AG04449 (cell line): ENCODE measurements at regions of chr1 and their contacts with region 1.

Region 1: GRCh38 chr1:8409106-8409505 is 91.2 kb downstream of the SLC45A1 start:
- DNase-seq: no peak
- H3K4me3 ChIP-seq: no peak overlapping the region; the same call in 1 of the 2 replicates
- CTCF ChIP-seq: peak; percentile 35

Region 2: DNA sequence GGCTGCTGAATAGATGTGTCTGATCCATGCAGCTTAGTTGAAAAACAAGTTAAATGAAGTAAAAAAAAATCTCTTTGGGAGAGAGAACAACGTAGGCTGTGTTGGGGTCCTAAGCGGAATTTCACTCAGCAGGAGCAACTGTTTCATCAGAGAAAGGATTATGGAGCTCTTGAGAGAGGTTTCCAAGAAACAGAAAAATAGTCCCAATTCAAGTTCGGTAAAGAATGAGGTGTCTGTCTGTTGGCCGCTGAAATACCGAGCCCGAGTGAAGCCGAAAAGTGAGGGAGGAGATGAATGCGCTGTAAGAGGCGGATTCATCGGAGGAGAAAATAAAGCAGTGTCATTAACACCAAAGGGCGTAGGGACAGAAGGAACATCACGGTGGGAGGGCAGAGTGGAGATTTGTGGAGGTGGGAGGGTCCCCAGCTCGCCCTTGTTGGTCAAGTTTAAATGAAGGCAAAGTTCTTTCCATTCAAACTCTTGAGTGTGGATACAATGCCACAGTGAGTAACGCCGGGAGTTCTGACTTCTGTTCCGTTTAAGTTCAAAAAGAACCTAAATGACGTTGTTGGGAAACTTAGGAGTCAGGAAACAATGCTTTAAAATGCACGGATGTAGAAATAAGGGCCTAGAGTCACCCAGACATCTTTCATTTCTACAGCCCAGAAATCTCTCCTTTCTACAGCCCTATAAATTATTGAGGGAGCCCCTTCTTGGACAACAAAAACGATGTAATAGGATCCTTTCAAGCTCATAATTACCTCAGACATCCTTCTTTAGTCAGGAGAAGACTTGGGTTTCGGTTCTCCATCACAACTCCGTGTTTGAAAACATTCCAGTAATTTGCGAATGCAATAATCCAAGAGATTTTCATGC is 106.8 kb before region 1 on chr1:
- CTCF ChIA-PET with region 1: no interaction called
- POLR2A ChIA-PET with region 1: no interaction called
- DNase-seq: no peak
- H3K4me3 ChIP-seq: no peak overlapping the region
- CTCF ChIP-seq: no peak

Region 3: GRCh38 chr1:8343464-8344001 is 65.6 kb before region 1 on chr1:
- CTCF ChIA-PET with region 1: no interaction called
- POLR2A ChIA-PET with region 1: no interaction called
- DNase-seq: peak; percentile 82
- H3K4me3 ChIP-seq: peak overlapping the region; percentile 3; the same call in 1 of the 2 replicates
- CTCF ChIP-seq: no peak

Region 4: GRCh38 chr1:8373581-8374241 is 35.4 kb before region 1 on chr1:
- CTCF ChIA-PET with region 1: interaction called, 10 read pairs
- POLR2A ChIA-PET with region 1: no interaction called
- DNase-seq: peak; percentile 49
- H3K4me3 ChIP-seq: peak overlapping the region; percentile 20; the same call in 1 of the 2 replicates
- CTCF ChIP-seq: no peak

Region 5: GRCh38 chr1:8396786-8397406 is 12.2 kb before region 1 on chr1:
- CTCF ChIA-PET with region 1: interaction called, 28 read pairs
- POLR2A ChIA-PET with region 1: interaction called, 6 read pairs
- DNase-seq: peak; percentile 99
- H3K4me3 ChIP-seq: no peak overlapping the region
- CTCF ChIP-seq: no peak

Region 6: DNA sequence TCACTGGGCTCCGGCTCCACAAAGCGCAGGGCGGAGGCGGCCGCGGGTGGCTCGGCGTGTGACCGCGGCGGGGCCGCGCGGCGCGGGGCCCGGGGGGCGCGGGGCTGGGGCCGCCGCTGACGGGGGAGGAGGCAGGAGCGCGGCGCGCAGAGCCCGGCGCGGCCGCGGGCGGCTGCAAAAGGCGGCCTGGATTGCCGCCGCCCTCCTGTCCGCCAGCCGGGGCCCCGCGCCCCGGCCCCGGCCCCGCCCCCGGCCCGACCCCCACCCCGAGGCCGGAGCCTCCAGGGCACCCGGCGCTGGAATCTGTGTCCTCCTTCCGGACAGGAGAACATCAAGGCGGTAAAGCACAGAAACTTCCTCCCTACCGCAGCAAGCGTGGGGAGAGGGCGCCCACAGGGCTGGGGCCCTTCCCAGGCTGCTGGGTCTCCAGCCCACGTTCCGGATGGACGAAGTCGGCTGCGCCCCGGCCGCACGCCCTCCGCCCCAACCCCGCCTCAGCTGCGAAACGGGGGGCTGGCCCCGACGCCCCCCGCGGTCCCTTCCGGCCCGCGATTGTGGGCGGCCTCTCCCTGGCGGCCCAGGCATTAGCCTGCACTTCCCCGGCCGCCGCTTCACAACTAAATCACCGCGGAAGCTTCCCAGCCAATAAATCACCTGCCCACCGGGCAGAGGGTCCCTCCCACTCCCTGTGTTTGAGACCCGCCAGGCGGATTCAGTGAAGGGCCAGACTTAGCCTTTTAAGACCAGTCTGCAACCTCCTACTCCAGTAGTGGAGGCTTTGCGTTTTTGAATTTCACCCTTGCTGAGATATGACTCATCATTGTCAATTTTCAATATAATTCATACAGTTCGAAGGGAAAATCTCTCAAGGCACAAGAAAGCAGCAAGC is 14.8 kb after region 1 on chr1:
- CTCF ChIA-PET with region 1: interaction called, 49 read pairs
- POLR2A ChIA-PET with region 1: interaction called, 3 read pairs
- DNase-seq: no peak
- H3K4me3 ChIP-seq: peak overlapping the region; percentile 74
- CTCF ChIP-seq: no peak

Region 7: GRCh38 chr1:8497210-8497801 is 88.2 kb after region 1 on chr1:
- CTCF ChIA-PET with region 1: interaction called, 11 read pairs
- POLR2A ChIA-PET with region 1: no interaction called
- DNase-seq: no peak
- H3K4me3 ChIP-seq: no peak overlapping the region
- CTCF ChIP-seq: no peak

Region 8: DNA sequence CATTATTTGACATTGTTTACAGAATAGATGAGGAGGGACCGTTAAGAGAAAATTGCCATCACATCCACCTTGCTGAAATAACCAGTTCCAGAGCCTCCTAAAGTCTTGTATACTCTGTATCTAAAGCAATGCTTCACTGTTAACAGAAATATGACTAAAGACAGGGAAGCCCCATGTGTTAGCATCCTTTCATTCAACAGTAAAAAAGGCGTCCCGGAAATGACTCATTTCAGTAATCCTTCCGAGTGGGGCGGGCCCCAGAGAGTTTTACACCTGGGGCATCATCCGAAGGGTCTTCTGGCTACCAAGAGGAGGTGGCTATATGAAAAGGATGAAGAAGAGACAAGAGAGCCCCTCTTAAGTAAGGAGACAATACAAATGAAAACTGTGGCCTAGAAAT is 136.0 kb after region 1 on chr1:
- CTCF ChIA-PET with region 1: no interaction called
- POLR2A ChIA-PET with region 1: no interaction called
- DNase-seq: no peak
- H3K4me3 ChIP-seq: no peak overlapping the region
- CTCF ChIP-seq: no peak